Activated T-helper 1 cell treated with anti-CD3 and anti-CD28 coated beads, Interleukin-12 subunit alpha, Interleukin-12 subunit beta, Interleukin-2, Interleukin-4 antibody, amounts not matched to agents 30 ng/mL and 10 ng/mL and 1 ng/mL, durations not matched to agents 14 hours and 24 hours and 36 hours (primary cell): ENCODE measurements at regions of chr1 and their contacts with region 1.

Region 1: GRCh38 chr1:84143796-84144565 is at the start of gene PRKACB:
- DNase-seq: peak; percentile 20
- H3K4me3 Mint-ChIP-seq: peak within 1 kb of the TSS; percentile 96
- H3K27ac Mint-ChIP-seq: peak within 1 kb of the TSS; percentile 99
- H3K4me1 Mint-ChIP-seq: peaks cover 44% of the 10 kb centered on the region
- H3K27me3 Mint-ChIP-seq: no peaks in the 10 kb centered on the region
- total RNA-seq, gene PRKACB: 20.8 and 22.7 TPM in 2 replicates

Region 2: GRCh38 chr1:83787246-83787998 is 356.6 kb before region 1 on chr1:
- intact Hi-C with region 1: no loop called
- DNase-seq: no peak
- H3K4me3 Mint-ChIP-seq: no peak overlapping the region
- H3K27ac Mint-ChIP-seq: no peak overlapping the region
- H3K4me1 Mint-ChIP-seq: no peaks in the 10 kb centered on the region
- H3K27me3 Mint-ChIP-seq: no peaks in the 10 kb centered on the region

Region 3: GRCh38 chr1:84077476-84078107 is 66.4 kb before region 1 on chr1:
- intact Hi-C with region 1: loop called (anchors 5 kb)
- DNase-seq: peak; percentile 63
- H3K4me3 Mint-ChIP-seq: peak overlapping the region; percentile 87
- H3K27ac Mint-ChIP-seq: peak overlapping the region; percentile 71
- H3K4me1 Mint-ChIP-seq: peaks cover 17% of the 10 kb centered on the region
- H3K27me3 Mint-ChIP-seq: peaks cover 23% of the 10 kb centered on the region

Region 4: DNA sequence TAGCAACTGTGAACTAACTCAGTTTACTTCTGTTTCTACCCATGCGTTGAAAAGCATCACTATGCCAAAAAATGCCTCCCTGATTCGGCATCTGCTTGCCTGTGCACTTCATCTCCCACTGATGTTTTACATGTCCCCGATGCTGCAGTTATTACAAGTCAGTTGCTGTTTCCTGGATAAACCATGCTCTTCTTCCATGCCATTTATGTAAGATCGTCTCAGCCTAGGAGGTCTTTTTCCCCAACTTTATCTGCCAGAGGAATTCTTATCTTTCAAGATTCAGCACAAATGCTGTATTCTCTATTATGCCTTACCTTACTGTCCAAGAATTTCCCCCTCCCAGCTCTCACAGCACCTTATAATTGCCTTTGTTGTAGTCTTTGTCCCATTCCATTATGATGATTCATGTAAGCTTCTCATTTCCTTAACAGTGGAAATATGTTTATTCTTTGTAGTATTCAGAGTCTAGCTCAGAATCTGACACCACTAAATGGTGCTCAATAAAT is 30.1 kb after region 1 on chr1:
- intact Hi-C with region 1: no loop called
- DNase-seq: no peak
- H3K4me3 Mint-ChIP-seq: no peak overlapping the region
- H3K27ac Mint-ChIP-seq: no peak overlapping the region
- H3K4me1 Mint-ChIP-seq: no peaks in the 10 kb centered on the region
- H3K27me3 Mint-ChIP-seq: no peaks in the 10 kb centered on the region

Region 5: GRCh38 chr1:84298328-84298683 is 154.3 kb after region 1 on chr1:
- intact Hi-C with region 1: loop called (anchors 1 kb)
- DNase-seq: peak; percentile 46
- H3K4me3 Mint-ChIP-seq: peak overlapping the region; percentile 86
- H3K27ac Mint-ChIP-seq: peak overlapping the region; percentile 68
- H3K4me1 Mint-ChIP-seq: peaks cover 39% of the 10 kb centered on the region
- H3K27me3 Mint-ChIP-seq: peaks cover 5% of the 10 kb centered on the region

Region 6: GRCh38 chr1:84506002-84506728 is 362.2 kb after region 1 on chr1 and contains the starts of genes GNG5 and SPATA1:
- intact Hi-C with region 1: loop called (anchors 2 kb)
- DNase-seq: peak; percentile 96
- H3K4me3 Mint-ChIP-seq: peak within 1 kb of the TSS; percentile 98
- H3K27ac Mint-ChIP-seq: peak within 1 kb of the TSS; percentile 98
- H3K4me1 Mint-ChIP-seq: peaks cover 38% of the 10 kb centered on the region
- H3K27me3 Mint-ChIP-seq: no peaks in the 10 kb centered on the region
- total RNA-seq, gene GNG5: 107 and 110 TPM in 2 replicates
- total RNA-seq, gene SPATA1: 1.2 and 1.3 TPM in 2 replicates

Region 7: DNA sequence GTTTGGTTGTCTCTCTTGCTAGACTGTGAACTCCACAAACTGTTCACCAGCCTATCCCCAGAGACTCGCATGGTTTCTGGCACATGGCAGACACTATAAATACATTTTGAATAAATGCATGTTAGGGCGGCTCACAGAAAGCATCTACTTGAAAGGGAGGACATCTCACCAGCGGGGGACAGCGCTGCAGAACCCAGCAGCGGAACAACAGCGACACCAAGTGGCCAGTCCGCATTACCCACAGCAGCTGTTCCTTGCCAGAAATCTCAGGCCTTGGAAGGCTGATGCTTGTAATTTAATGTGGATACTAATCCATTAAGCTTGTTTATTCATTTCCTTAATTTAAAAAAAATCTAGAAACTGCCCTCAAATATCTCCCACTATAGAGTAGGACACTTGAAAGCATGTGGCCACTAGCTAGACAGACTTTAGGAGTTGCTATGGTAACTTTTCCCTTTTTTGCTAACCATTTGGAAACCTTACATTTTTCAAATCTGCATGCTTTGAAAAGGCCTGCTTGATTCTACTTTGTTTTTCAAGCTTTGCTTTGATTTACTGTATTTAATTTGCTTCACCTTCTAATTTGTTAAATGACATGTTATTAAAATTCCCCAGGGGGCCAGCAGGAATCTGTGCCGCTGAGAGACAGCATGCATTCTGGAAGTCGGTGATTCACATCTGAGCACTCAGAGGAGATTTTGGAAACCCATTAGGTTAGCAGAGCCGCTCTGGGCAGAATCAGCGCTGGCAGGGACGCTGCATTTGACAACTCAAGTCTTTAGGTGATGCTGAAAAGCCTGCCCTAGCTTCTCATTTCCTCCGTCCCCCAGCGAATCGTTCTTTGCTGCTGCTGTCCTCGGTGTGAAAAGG is 609.8 kb after region 1 on chr1:
- intact Hi-C with region 1: loop called (anchors 1 kb)
- DNase-seq: peak; percentile 57
- H3K4me3 Mint-ChIP-seq: no peak overlapping the region
- H3K27ac Mint-ChIP-seq: no peak overlapping the region
- H3K4me1 Mint-ChIP-seq: peaks cover 5% of the 10 kb centered on the region
- H3K27me3 Mint-ChIP-seq: peaks cover 26% of the 10 kb centered on the region

Region 8: GRCh38 chr1:84936116-84936810 is 792.3 kb after region 1 on chr1:
- intact Hi-C with region 1: loop called (anchors 5 kb)
- DNase-seq: peak; percentile 26
- H3K4me3 Mint-ChIP-seq: no peak overlapping the region
- H3K27ac Mint-ChIP-seq: no peak overlapping the region
- H3K4me1 Mint-ChIP-seq: peaks cover 7% of the 10 kb centered on the region
- H3K27me3 Mint-ChIP-seq: no peaks in the 10 kb centered on the region

Region 9: GRCh38 chr1:85116856-85117255 is 972.9 kb after region 1 on chr1:
- intact Hi-C with region 1: no loop called
- DNase-seq: no peak
- H3K4me3 Mint-ChIP-seq: no peak overlapping the region
- H3K27ac Mint-ChIP-seq: no peak overlapping the region
- H3K4me1 Mint-ChIP-seq: no peaks in the 10 kb centered on the region
- H3K27me3 Mint-ChIP-seq: peaks cover 9% of the 10 kb centered on the region